ENCODE measurements at regions of chr2 and their contacts with region 1.

Region 1: GRCh38 chr2:102240640-102241370 is 54.0 kb downstream of the IL1RL2 start:
- DNase-seq: peak; percentile 92
- ATAC-seq: peak; percentile 97
- H3K4me3 Mint-ChIP-seq: peak overlapping the region; percentile 16
- H3K27ac Mint-ChIP-seq: peak overlapping the region; percentile 71
- H3K4me1 Mint-ChIP-seq: peaks cover 38% of the 10 kb centered on the region
- H3K27me3 Mint-ChIP-seq: no peaks in the 10 kb centered on the region

Region 2: DNA sequence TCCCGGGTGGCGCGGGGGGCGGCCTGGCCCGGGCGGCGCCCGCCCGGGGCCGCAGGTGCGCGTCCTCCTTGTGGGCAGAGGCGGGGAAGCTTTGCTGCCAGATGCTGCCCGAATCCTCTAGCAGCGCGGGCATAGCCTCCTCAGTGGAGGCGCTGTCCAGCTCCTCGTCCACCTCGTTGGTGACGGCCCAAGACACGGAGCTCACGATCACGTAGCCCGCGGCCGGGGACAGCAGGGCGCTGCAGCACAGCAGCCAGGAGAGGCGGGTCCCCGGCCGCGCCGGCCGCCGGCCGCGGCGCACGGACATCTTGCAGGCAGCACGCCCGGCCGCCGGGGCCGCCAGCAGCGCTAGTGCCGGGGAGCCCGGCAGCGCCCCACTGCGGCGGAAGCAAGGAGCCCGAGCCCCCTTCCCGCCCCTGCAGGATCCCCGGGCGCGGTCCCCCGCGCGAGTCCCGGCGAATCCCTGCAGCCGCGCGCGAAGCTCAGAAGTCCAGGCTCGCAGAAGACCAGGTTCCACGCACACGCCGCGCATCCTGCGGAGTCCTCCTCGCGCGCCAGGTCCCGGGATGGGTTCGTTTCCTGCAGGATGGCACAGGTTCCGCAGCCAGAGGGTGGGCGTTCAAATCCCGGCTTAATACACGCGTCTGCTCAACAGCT is 853.5 kb before region 1 on chr2 and contains the start of gene CREG2:
- CTCF ChIA-PET with region 1: no interaction called
- POLR2A ChIA-PET with region 1: no interaction called
- DNase-seq: peak; percentile 62
- ATAC-seq: peak; percentile 89
- H3K4me3 Mint-ChIP-seq: peak within 1 kb of the TSS; percentile 52
- H3K27ac Mint-ChIP-seq: no peak within 1 kb of the TSS
- H3K4me1 Mint-ChIP-seq: peaks cover 11% of the 10 kb centered on the region
- H3K27me3 Mint-ChIP-seq: peaks cover 58% of the 10 kb centered on the region
- total RNA-seq, gene CREG2: not detected

Region 3: DNA sequence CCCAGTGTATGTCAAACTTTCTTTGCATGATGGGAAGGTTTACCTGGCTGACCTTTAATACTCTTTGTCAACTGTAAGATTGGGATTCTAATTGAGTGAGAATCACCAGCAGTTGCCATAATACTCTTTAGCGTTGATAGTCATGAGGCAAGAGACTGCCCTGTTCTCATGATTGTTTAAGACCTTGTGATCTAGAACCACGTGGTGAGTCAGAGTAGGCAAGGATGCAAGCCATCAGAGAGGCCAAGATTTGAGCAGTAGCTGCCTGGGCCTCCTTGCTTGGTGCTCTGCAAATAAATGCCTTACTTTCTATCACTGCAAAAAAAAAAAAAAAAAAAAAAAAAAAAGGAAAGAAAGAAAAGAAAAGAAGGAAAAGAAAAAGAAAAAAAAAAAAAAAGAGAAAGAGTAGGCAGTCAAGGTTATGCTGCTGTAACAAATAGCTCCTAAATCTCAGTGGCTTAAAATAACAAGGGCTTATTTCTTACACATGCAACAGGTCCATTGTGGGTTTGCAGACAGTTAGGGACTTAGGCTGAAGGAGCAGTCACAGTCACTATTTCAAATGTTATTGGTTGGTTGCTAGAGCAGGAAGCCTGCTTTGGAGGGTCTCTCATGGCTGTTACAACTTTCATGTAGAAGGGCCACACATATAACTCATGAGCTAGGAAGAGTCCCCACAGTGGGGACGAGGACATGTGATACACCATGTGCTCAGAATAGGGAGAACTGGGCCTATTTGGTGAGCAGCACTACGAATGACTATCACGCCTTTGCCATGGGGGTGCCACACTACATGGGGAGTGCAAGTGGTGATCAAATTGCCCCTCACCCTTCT is 227.4 kb before region 1 on chr2:
- CTCF ChIA-PET with region 1: interaction called, 77 read pairs
- POLR2A ChIA-PET with region 1: no interaction called
- DNase-seq: no peak
- ATAC-seq: no peak
- H3K4me3 Mint-ChIP-seq: no peak overlapping the region
- H3K27ac Mint-ChIP-seq: no peak overlapping the region
- H3K4me1 Mint-ChIP-seq: no peaks in the 10 kb centered on the region
- H3K27me3 Mint-ChIP-seq: peaks cover 2% of the 10 kb centered on the region

Region 4: DNA sequence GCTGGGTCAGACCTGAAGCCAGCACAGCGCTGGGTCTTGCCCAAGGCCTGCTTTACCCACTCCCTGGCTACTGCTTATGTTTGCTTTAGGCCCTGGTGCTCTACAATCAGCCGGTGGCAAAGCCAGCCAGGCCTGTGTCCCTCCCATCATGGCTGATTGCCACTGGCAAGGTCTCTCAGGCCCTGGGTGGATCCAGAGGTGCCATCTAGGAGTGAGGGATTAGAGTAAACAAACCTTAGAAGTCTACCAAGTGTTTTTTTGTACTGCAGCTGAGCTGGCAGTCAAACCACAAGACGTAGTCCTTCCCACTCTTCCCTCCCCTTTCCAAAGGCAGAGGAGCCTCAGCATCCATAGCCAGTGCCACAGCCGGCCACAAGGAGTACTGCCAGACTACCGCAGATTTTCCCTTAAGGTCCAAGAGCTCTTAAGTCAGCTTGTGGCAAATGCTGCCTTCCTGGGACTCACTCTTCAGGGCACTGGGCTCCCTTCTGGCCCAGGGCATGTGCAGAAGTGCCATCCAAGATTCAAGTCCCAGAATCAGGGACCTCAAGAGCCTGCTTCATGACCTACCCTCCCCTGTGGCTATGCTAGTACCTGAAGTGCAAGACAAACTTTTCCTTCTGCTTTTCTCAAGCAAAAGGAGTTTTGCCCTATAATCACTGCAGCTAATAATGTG is 34.0 kb before region 1 on chr2:
- CTCF ChIA-PET with region 1: interaction called, 10 read pairs
- POLR2A ChIA-PET with region 1: no interaction called
- DNase-seq: no peak
- ATAC-seq: no peak
- H3K4me3 Mint-ChIP-seq: no peak overlapping the region
- H3K27ac Mint-ChIP-seq: no peak overlapping the region
- H3K4me1 Mint-ChIP-seq: no peaks in the 10 kb centered on the region
- H3K27me3 Mint-ChIP-seq: peaks cover 6% of the 10 kb centered on the region

Region 5: DNA sequence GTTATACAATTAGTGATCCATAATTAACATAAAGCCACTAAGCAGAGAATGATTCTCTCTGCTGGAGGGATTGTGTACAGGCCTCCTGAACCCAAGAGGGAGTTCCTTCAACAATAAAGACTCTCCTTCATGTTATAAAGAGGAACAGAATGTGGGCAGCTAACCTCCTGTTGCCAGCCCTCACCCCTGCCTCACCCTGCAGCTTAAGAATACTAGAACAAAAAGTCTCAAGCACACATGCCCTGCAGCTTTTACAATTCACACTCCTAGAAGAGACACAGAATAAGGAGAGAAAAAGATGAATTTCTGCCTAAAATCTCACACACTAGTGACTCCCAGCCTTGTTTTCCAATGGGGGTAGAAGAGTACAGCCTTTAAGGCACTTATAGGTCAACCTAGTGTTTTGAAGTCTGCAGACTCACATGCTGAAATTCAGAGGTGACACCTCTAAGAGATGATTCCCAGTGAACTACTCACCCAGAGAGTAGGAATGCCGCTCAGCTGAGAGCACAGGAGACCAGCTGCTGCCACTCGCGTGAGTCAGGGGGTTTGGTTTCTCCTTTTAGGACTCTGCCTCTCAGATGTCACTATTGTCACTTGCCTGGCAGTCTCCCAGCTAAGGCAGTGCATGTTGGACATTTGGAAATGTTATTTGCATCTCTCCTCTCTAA is 38.0 kb after region 1 on chr2:
- CTCF ChIA-PET with region 1: interaction called, 17 read pairs
- POLR2A ChIA-PET with region 1: no interaction called
- DNase-seq: no peak
- ATAC-seq: no peak
- H3K4me3 Mint-ChIP-seq: no peak overlapping the region
- H3K27ac Mint-ChIP-seq: peak overlapping the region; percentile 80
- H3K4me1 Mint-ChIP-seq: peaks cover 72% of the 10 kb centered on the region
- H3K27me3 Mint-ChIP-seq: no peaks in the 10 kb centered on the region

Region 6: GRCh38 chr2:102355526-102356380 is 114.9 kb after region 1 on chr2 and contains the start of gene IL18R1:
- CTCF ChIA-PET with region 1: interaction called, 14 read pairs
- POLR2A ChIA-PET with region 1: no interaction called
- DNase-seq: peak; percentile 81
- ATAC-seq: peak; percentile 92
- H3K4me3 Mint-ChIP-seq: peak within 1 kb of the TSS; percentile 100
- H3K27ac Mint-ChIP-seq: peak within 1 kb of the TSS; percentile 96
- H3K4me1 Mint-ChIP-seq: peaks cover 54% of the 10 kb centered on the region
- H3K27me3 Mint-ChIP-seq: no peaks in the 10 kb centered on the region
- total RNA-seq, gene IL18R1: 50.2 to 53.1 TPM

Region 7: GRCh38 chr2:102473020-102473419 is 232.2 kb after region 1 on chr2 and contains the start of gene SLC9A4:
- CTCF ChIA-PET with region 1: interaction called, 12 read pairs
- POLR2A ChIA-PET with region 1: no interaction called
- DNase-seq: peak; percentile 73
- ATAC-seq: no peak
- H3K4me3 Mint-ChIP-seq: no peak within 1 kb of the TSS
- H3K27ac Mint-ChIP-seq: no peak within 1 kb of the TSS
- H3K4me1 Mint-ChIP-seq: no peaks in the 10 kb centered on the region
- H3K27me3 Mint-ChIP-seq: peaks cover 35% of the 10 kb centered on the region
- total RNA-seq, gene SLC9A4: 0.08 TPM